HepG2 (cell line): ENCODE measurements at regions of chr16 and their contacts with region 1.

Region 1: DNA sequence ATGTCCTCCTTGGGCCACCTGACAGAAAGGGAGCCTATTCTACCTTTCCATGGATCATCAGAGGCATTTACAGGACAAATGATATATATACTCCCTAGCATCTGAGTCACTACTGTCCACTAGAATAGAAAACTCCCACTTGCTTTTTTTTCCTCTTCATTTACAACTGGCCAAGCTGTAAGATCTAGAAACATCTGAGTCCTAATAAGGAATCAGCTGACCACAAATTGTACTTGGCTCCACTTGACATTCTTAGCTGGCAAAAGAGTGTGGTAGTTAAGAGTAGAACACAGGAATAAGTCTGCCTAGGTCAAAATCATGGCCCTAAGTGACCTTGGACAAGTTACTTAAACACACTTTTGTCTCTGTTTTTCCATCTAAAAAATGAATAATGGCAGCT is 5.2 kb downstream of the RUSF1 start:
- DNase-seq: no peak
- ATAC-seq: no peak
- H3K4me3 ChIP-seq: no peak overlapping the region
- H3K27ac ChIP-seq: no peak overlapping the region
- H3K4me1 ChIP-seq: peaks cover 49% of the 10 kb centered on the region
- H3K27me3 ChIP-seq: no peaks in the 10 kb centered on the region; a peak in 1 of 5 replicates
- CTCF ChIP-seq: no peak
- EP300 ChIP-seq: no peak
- POLR2A ChIP-seq: no peak
- RAD21 ChIP-seq: no peak

Region 2: GRCh38 chr16:31476303-31477219 is 26.4 kb before region 1 on chr16:
- CTCF ChIA-PET with region 1: no interaction called
- POLR2A ChIA-PET with region 1: interaction called, 40 read pairs
- in situ Hi-C with region 1: no loop called
- intact Hi-C with region 1: loop called (anchors 2 kb)
- DNase-seq: peak; percentile 63
- ATAC-seq: peak; percentile 63
- H3K4me3 ChIP-seq: peak overlapping the region; percentile 71 to 94 (median 92)
- H3K27ac ChIP-seq: peak overlapping the region; percentile 80
- H3K4me1 ChIP-seq: peaks cover 77% of the 10 kb centered on the region
- H3K27me3 ChIP-seq: peaks cover 0 to 16% of the 10 kb centered on the region in 2 experiments; a peak in 3 of 5 replicates
- CTCF ChIP-seq: no peak
- EP300 ChIP-seq: no peak
- POLR2A ChIP-seq: peak; percentile 8 to 72; a peak in 2 of 4 replicates
- RAD21 ChIP-seq: no peak